Ascending aorta (tissue), 2 donors: ENCODE measurements at regions of chrX and their contacts with region 1.

Region 1: GRCh38 chrX:54248309-54248708 is 65.3 kb upstream of the FAM120C start:
- DNase-seq: no peak
- H3K4me3 ChIP-seq: no peak overlapping the region
- H3K27ac ChIP-seq: no peak overlapping the region
- H3K4me1 ChIP-seq: no peaks in the 10 kb centered on the region
- H3K27me3 ChIP-seq: no peaks in the 10 kb centered on the region
- CTCF ChIP-seq: peak in 2 of 3 experiments; percentile 13 to 34

Region 2: DNA sequence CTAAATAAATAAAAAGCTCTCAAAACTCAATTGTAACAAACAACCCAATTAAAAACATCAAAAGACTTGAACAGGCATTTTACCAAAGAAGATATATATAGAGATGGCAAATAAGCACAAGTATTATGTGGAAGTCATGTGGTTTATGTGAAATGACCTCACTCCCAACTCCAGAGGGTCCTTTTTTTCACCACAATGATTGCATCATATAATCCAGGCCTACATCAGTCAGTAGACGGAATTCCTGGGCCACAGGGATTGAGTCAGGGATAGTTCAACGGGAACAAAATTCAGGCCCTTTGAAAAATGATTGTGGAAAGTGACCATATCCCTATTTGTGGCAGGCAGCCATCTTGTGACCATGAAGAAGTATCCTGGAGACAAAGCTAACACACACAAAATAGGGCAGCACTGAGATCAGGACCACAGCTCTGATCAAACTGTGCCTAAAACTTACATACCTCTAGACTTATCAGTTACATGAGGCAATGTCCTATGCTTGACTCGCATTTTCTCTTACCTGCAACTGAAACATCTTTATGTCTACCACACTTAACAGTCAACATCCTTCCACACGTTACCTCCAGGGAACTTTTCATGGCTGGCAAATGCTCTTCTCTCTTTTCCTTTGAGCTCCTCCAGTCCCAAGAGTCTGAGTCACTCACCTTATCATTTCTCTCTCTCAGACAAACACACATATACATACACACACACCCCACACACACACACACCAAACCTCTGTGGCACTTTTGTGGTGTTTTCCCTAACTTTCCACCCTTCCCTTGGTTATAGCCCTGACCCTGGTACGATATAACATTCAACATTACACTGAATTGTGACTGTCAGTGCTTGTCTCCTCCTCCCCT is 317.6 kb before region 1 on chrX:
- intact Hi-C with region 1: no loop called
- DNase-seq: no peak
- H3K4me3 ChIP-seq: no peak overlapping the region
- H3K27ac ChIP-seq: no peak overlapping the region
- H3K4me1 ChIP-seq: no peaks in the 10 kb centered on the region
- H3K27me3 ChIP-seq: no peaks in the 10 kb centered on the region
- CTCF ChIP-seq: no peak

Region 3: DNA sequence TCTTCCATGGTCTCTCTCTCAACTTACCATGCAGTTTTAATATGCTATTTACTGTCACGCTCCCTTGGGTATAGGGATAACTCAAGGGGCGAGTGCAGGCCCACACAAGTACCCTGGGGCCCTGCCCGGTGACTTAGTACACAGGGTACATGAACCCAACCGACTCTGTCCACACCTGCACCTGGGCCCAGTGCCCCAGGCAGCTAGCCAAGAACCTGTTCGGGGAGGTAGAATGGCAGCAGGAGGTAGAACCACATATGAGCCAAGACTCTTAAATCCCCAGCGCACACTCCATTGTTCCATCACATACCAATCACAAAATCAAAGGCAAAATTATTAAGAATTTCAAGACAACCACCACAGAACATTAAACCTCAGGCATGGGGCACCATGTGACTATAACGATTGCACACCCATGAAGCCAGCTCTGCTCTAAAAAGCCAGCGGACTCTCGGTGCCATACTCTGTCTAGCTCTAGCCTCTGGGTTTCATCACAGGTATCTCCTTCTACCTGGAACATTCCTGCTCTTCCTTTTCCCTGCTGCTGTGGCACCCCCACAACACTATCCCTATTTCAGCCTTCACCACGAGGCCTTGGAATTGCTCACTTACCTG is 218.7 kb before region 1 on chrX:
- intact Hi-C with region 1: no loop called
- DNase-seq: no peak
- H3K4me3 ChIP-seq: no peak overlapping the region
- H3K27ac ChIP-seq: no peak overlapping the region
- H3K4me1 ChIP-seq: no peaks in the 10 kb centered on the region
- H3K27me3 ChIP-seq: no peaks in the 10 kb centered on the region
- CTCF ChIP-seq: no peak

Region 4: DNA sequence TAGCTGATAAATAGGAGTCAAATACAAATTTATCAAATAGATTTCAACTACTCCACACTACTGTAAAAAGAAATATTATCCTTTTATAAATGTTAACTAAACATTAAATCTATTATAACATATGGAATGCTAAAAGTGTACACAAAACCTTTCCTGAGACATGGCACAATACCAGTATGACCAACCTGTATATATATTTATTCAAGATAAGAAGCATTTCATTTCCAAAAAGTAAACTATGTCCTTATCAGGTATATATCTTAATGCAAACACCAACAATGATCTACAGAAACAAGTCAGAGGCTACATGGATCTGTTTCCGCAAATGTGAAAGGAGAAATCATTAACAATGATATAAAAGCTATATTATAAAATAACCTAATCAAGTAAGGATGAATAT is 71.8 kb after region 1 on chrX:
- intact Hi-C with region 1: loop called (anchors 10 kb)
- DNase-seq: no peak
- H3K4me3 ChIP-seq: no peak overlapping the region
- H3K27ac ChIP-seq: no peak overlapping the region
- H3K4me1 ChIP-seq: no peaks in the 10 kb centered on the region
- H3K27me3 ChIP-seq: no peaks in the 10 kb centered on the region
- CTCF ChIP-seq: no peak

Region 5: GRCh38 chrX:54439967-54440871 is 191.9 kb after region 1 on chrX and contains the start of gene TSR2:
- intact Hi-C with region 1: loop called (anchors 10 kb)
- DNase-seq: peak; percentile 63 to 88
- H3K4me3 ChIP-seq: peak within 1 kb of the TSS; percentile 54 to 89
- H3K27ac ChIP-seq: peak within 1 kb of the TSS; percentile 38 to 56
- H3K4me1 ChIP-seq: peaks cover 0 to 6% of the 10 kb centered on the region in 2 donors
- H3K27me3 ChIP-seq: no peaks in the 10 kb centered on the region
- CTCF ChIP-seq: peak in 1 of 3 experiments; percentile 26
- total RNA-seq, gene TSR2: 14.0 TPM

Region 6: DNA sequence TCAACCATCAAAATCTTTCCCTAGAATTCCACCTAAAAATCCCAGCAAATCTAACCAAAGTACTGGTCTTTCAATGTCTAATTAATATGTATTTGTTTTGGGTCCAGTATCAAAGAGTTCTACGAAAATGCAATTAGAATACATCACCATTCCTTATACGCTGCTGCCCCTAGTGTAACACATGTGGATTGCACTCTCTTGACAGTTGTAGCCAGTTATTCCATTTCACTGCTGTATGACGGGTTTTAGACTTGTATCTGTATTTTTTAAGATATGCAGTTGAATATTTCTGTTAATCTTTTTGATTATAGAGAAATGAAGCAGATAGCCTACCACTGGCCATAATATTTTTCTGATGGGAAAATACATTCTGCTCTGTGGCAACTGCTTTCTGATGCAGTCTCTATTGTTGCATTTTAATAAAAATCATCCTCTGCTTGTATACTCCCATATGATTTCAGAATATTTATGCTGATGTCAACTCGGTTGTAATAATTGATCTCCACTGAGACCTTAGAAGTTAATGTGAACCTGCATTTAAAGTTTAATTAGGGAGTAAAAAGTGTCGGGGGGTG is 809.5 kb after region 1 on chrX:
- intact Hi-C with region 1: loop called (anchors 5 kb)
- DNase-seq: peak in 1 of 2 donors; percentile 62
- H3K4me3 ChIP-seq: peak overlapping the region in 1 of 2 donors; percentile 58
- H3K27ac ChIP-seq: no peak overlapping the region
- H3K4me1 ChIP-seq: no peaks in the 10 kb centered on the region
- H3K27me3 ChIP-seq: no peaks in the 10 kb centered on the region
- CTCF ChIP-seq: peak; percentile 36 to 79 (median 71)